Common myeloid progenitor, CD34-positive (primary cell): ENCODE measurements at regions of chr19 and their contacts with region 1.

Region 1: DNA sequence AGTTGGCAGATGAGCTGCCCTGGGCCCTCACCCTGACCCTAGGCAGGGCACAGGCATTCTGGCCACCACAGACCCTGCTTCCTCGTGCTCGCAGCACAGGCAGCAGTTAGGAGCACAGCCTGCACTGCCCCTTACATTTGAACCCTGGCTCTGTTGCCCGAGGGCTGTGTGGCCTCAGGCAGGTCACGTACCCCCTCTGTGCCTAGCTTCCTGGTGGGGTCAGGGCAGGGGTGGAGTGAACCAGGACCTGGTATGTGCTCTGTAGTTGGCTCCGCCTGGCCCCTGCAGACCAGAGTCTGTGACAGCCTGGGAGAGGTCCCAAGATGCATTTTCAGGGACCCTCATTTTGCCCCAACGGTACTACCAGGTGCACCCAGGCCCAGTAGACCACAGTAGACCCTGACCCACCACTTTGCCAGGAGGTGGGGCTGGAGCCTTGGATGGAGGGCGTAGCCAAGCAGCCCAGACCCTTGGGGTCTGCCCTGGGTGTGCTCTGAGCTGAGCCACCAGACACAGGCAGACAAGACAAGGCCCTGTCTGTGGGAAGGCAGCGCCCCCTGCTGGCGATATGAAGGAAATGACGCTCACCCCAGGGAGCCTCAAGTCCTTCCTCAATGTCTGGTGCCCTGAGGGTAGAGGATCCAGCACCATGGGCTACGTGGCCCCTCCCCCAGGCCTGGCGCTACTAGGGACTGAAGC is 9.1 kb downstream of the LYL1 start:
- DNase-seq: peak; percentile 88 to 93 (median 92)
- H3K4me3 ChIP-seq: peak overlapping the region in 3 of 7 experiments; percentile 32 to 98 (median 83)
- H3K27ac ChIP-seq: peak overlapping the region in 1 of 2 experiments; percentile 19
- H3K4me1 ChIP-seq: peaks cover 0 to 67% (median 53%) of the 10 kb centered on the region in 4 experiments
- H3K27me3 ChIP-seq: no peaks in the 10 kb centered on the region

Region 2: DNA sequence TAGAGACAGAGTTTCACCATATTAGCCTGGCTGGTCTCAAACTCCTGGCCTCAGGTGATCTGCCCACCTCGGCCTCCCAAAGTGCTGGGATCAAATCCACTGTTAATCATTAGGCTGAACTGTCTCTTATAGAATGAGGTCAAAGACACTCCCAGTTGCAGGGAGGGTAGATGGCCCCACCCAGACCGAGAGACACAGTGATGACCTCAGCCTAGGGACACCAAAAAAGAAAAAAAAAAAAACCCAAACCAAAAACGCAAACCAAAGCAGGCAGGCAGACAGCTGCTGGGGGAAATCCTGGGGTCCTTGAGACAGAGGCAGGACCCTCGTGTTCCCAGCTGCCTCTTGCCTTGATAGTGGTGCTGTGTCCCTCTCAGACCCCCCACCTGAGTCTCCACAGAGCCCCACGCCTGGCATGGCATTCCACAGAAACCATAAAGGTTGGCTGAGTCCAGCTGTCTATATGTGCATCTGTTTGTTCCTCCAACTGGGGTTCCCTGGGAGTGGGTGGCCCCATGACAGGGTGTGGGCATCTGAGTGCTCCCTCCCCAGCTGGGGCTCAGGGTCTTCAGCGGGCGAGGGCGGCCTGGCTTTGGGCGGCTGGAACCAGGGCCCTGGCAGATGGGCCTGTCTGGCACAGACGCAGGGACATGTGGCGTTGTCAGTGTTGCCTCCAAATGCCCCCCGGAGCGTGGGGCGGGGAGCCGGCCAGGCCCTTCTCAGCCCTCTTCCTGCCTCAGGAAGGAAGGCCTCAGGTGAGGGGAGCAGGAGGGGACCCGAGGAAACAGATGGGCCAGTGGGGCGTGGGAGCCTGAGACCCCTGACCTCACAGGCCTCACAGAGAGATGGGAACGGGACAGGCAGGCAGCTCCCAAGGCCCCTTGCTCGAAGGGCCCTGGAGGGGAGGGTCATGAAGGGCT is 119.0 kb before region 1 on chr19:
- CTCF ChIA-PET with region 1: interaction called, 154 read pairs
- POLR2A ChIA-PET with region 1: interaction called, 7 read pairs
- DNase-seq: no peak
- H3K4me3 ChIP-seq: no peak overlapping the region
- H3K27ac ChIP-seq: no peak overlapping the region
- H3K4me1 ChIP-seq: peaks cover 0 to 14% (median 10%) of the 10 kb centered on the region in 4 experiments
- H3K27me3 ChIP-seq: no peaks in the 10 kb centered on the region

Region 3: GRCh38 chr19:13007292-13008045 is 86.1 kb before region 1 on chr19:
- CTCF ChIA-PET with region 1: interaction called, 16 read pairs
- POLR2A ChIA-PET with region 1: interaction called, 3 read pairs
- DNase-seq: peak in 1 of 3 donors; percentile 28
- H3K4me3 ChIP-seq: no peak overlapping the region
- H3K27ac ChIP-seq: no peak overlapping the region
- H3K4me1 ChIP-seq: peaks cover 0 to 29% (median 15%) of the 10 kb centered on the region in 4 experiments
- H3K27me3 ChIP-seq: peaks cover 0 to 48% (median 25%) of the 10 kb centered on the region in 5 experiments

Region 4: GRCh38 chr19:13060964-13061927 is 32.3 kb before region 1 on chr19:
- CTCF ChIA-PET with region 1: interaction called, 73 read pairs
- POLR2A ChIA-PET with region 1: interaction called, 3 read pairs
- DNase-seq: peak; percentile 63 to 78 (median 78)
- H3K4me3 ChIP-seq: peak overlapping the region; percentile 34 to 86 (median 64)
- H3K27ac ChIP-seq: no peak overlapping the region
- H3K4me1 ChIP-seq: peaks cover 0 to 72% (median 34%) of the 10 kb centered on the region in 4 experiments
- H3K27me3 ChIP-seq: no peaks in the 10 kb centered on the region

Region 5: DNA sequence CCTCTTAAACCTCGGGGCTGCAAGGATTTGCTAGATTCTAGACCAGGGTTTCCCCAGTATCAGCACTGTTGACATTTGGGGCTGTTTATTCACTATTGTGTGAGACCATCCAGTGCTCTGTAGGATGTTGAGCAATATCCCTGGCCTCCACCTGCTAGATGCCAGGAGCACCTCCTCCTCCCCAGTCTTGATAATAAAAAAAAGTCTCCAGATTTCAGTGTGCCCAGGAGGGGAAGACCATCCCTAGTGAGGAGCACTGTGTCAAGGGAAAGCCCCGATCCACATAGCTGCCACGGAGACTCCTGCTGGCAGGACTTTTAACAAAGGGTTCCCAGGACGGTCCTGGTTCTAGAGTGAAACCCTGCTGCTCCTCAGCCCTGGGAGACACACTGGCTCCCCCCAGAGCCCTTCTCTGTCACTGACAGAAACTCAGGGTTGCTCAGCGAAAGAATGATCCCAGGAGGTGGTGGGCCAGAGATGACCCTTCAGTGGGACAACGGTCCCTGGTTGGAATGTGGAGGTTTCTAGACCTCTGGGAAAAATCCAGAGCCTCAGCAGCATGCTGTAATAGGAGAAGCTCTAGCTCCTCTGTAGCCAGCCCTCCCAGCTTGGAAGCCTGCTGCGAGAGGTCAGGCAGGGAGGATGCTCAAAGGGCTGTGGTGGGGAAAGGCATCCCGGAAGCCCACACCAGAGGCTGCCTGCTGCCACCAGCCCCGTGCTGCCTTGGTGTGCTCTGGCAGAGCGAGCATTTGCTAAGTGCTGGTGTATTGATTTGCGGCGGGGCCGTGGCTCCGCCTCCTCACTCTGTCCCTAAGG is 11.2 kb before region 1 on chr19:
- CTCF ChIA-PET with region 1: interaction called, 30 read pairs
- POLR2A ChIA-PET with region 1: interaction called, 3 read pairs
- DNase-seq: peak in 2 of 3 donors; percentile 41 to 42
- H3K4me3 ChIP-seq: no peak overlapping the region
- H3K27ac ChIP-seq: no peak overlapping the region
- H3K4me1 ChIP-seq: peaks cover 0 to 62% (median 51%) of the 10 kb centered on the region in 4 experiments
- H3K27me3 ChIP-seq: no peaks in the 10 kb centered on the region